ENCODE measurements at regions of chr11 and their contacts with region 1.

Region 1: DNA sequence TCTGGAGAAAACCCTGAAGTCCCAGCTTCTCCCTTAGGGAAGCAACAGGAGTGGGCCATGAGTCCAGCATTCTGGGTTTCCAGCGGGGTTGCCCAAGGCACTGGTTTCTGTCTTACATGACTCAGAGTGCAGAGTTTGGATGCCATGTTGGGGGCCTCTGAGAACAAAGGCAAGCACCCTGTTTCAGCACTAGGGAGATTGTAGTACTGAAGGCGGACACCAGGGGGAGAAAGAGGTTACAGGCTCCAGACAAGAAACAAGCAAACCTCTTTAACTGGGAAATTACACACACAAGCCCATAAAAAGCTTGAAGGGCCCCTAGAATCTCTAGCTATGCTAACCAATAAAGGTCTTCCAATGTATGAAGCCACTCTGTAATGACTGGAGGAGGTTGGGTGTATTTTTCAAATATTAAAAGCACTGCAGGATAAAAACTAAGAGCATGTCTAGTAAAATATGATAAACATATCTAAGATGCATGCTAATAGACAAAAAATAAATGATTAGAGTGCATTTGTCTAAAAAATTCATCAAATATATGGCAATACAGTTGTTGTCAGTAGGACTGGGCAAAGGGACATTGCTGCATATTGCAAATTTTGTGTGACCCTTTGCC is 7.1 kb downstream of the MS4A6E start:
- DNase-seq: peak; percentile 86
- ATAC-seq: peak; percentile 92
- H3K4me3 Mint-ChIP-seq: no peak overlapping the region
- H3K27ac Mint-ChIP-seq: no peak overlapping the region
- H3K4me1 Mint-ChIP-seq: no peaks in the 10 kb centered on the region
- H3K27me3 Mint-ChIP-seq: peaks cover 3% of the 10 kb centered on the region
- CTCF ChIP-seq: peak; percentile 79

Region 2: GRCh38 chr11:60318726-60319125 is 15.4 kb before region 1 on chr11:
- CTCF ChIA-PET with region 1: interaction called, 10 read pairs
- POLR2A ChIA-PET with region 1: no interaction called
- intact Hi-C with region 1: no loop called
- DNase-seq: no peak
- ATAC-seq: no peak
- H3K4me3 Mint-ChIP-seq: no peak overlapping the region
- H3K27ac Mint-ChIP-seq: no peak overlapping the region
- H3K4me1 Mint-ChIP-seq: peaks cover 2% of the 10 kb centered on the region
- H3K27me3 Mint-ChIP-seq: peaks cover 22% of the 10 kb centered on the region
- CTCF ChIP-seq: no peak